A549 (cell line): ENCODE measurements at regions of chr5 and their contacts with region 1.

Region 1: GRCh38 chr5:111550279-111551020 is 38.1 kb upstream of the STARD4 start:
- DNase-seq: peak; percentile 58 to 77
- ATAC-seq: peak; percentile 92 to 99
- H3K4me3 ChIP-seq: no peak overlapping the region
- H3K27ac ChIP-seq: 0 out of 6 replicates have a peak overlapping the region, but pooled peaks of 1 of the 2 experiments have one; percentile 11
- H3K4me1 ChIP-seq: peaks cover 3% of the 10 kb centered on the region; the same call in 2 of the 3 replicates
- CTCF ChIP-seq: peak; percentile 81
- EP300 ChIP-seq: no peak
- POLR2A ChIP-seq: no peak
- RAD21 ChIP-seq: peak; percentile 82 to 89

Region 2: GRCh38 chr5:110973510-110973909 is 576.9 kb before region 1 on chr5:
- CTCF ChIA-PET with region 1: no interaction called
- POLR2A ChIA-PET with region 1: no interaction called
- DNase-seq: no peak
- ATAC-seq: no peak
- H3K4me3 ChIP-seq: no peak overlapping the region
- H3K27ac ChIP-seq: no peak overlapping the region
- H3K4me1 ChIP-seq: no peaks in the 10 kb centered on the region
- CTCF ChIP-seq: no peak
- EP300 ChIP-seq: no peak
- POLR2A ChIP-seq: no peak
- RAD21 ChIP-seq: no peak

Region 3: GRCh38 chr5:112146323-112147226 is 596.1 kb after region 1 on chr5:
- CTCF ChIA-PET with region 1: interaction called, 25 read pairs
- POLR2A ChIA-PET with region 1: no interaction called
- DNase-seq: peak; percentile 48 to 73
- ATAC-seq: peak; percentile 96 to 99
- H3K4me3 ChIP-seq: no peak overlapping the region
- H3K27ac ChIP-seq: no peak overlapping the region
- H3K4me1 ChIP-seq: no peaks in the 10 kb centered on the region
- CTCF ChIP-seq: peak; percentile 92
- EP300 ChIP-seq: no peak
- POLR2A ChIP-seq: no peak
- RAD21 ChIP-seq: peak; percentile 94 to 96